GM10248 (cell line): ENCODE measurements at regions of chr2 and their contacts with region 1.

Region 1: DNA sequence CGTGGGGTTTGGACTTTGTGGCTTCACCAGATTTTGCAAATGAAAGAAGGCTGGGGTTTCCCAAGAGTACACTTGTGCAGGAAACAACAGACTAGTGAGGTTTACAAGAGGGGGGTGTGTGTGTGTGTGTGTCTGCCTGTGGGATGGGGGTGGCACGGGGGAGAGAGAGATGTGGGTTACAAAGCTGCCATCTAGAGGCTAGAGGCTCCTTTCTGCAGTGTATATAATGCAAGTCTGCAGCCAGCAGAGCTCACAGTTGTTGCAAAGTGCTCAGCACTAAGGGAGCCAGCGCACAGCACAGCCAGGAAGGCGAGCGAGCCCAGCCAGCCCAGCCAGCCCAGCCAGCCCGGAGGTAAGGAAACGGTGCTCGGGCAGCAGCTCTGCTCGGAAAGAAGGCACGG is at the start of gene ACKR3:
- DNase-seq: peak; percentile 86
- CTCF ChIP-seq: peak; percentile 71

Region 2: GRCh38 chr2:236536727-236537398 is 32.7 kb before region 1 on chr2:
- CTCF ChIA-PET with region 1: interaction called, 25 read pairs
- POLR2A ChIA-PET with region 1: interaction called, 7 read pairs
- DNase-seq: peak; percentile 39
- CTCF ChIP-seq: no peak

Region 3: GRCh38 chr2:236545814-236546480 is 23.6 kb before region 1 on chr2:
- CTCF ChIA-PET with region 1: interaction called, 17 read pairs
- POLR2A ChIA-PET with region 1: interaction called, 8 read pairs
- DNase-seq: peak; percentile 74
- CTCF ChIP-seq: no peak

Region 4: DNA sequence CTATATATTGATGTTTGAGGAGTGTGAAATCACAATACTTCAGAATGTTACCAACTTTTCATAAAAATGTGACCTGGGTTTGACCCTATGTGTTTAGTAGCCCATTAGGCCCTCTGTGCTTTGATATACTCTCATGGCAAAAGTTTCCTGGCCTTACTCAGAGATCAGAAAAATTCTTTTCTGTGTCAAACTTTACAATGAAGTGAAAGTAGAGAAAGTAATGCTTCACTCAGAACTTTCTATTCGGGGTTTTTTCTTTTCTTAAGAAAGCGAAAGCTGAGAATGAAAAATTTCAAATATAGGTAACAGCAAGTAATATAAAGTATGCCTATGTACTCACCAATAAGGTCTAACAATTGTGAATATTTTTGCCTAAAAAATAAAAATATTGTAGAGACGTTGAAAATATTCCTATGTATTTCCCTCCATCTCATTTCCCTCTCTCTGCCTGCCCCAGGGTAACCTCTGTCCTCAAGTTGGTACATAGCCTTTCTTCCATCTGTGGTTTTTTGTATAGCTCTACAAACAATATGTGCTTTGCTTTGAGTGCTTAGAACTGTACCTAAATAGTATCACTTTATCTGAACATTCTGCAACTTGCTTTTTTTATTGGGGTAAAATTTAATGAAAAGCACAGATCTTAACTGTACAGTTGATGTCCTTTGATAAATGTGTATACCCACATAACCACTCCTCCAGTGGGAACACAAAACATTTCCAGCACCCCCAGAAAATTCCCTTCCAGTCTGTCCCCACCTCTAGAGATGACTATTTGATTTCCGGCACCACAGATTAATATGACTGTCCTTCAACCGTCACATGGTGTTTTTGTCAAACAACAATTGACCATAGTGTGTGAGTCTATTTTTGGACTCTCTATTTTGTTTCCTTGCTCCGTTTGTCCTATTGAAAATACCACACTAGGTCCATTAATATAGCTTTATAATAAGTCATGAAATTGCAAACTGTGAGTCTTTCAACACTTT is 10.3 kb before region 1 on chr2:
- CTCF ChIA-PET with region 1: interaction called, 41 read pairs
- POLR2A ChIA-PET with region 1: interaction called, 7 read pairs
- DNase-seq: no peak
- CTCF ChIP-seq: no peak

Region 5: GRCh38 chr2:237060534-237061312 is 491.1 kb after region 1 on chr2:
- CTCF ChIA-PET with region 1: interaction called, 14 read pairs
- POLR2A ChIA-PET with region 1: interaction called, 3 read pairs
- DNase-seq: peak; percentile 62
- CTCF ChIP-seq: peak; percentile 69